Caco-2 (cell line): ENCODE measurements at regions of chr16 and their contacts with region 1.

Region 1: GRCh38 chr16:75622761-75623605 is at the start of gene ADAT1:
- DNase-seq: peak; percentile 98
- H3K4me3 ChIP-seq: peak within 1 kb of the TSS; percentile 68
- H3K4me3 Mint-ChIP-seq: peak within 1 kb of the TSS; percentile 94
- H3K27ac Mint-ChIP-seq: peak within 1 kb of the TSS; percentile 98
- H3K4me1 ChIP-seq: peaks cover 35% of the 10 kb centered on the region
- H3K4me1 Mint-ChIP-seq: peaks cover 33% of the 10 kb centered on the region
- H3K27me3 ChIP-seq: no peaks in the 10 kb centered on the region
- H3K27me3 Mint-ChIP-seq: no peaks in the 10 kb centered on the region
- CTCF ChIP-seq: no peak
- total RNA-seq, gene ADAT1: 70.1 and 71.3 TPM in 2 replicates

Region 2: DNA sequence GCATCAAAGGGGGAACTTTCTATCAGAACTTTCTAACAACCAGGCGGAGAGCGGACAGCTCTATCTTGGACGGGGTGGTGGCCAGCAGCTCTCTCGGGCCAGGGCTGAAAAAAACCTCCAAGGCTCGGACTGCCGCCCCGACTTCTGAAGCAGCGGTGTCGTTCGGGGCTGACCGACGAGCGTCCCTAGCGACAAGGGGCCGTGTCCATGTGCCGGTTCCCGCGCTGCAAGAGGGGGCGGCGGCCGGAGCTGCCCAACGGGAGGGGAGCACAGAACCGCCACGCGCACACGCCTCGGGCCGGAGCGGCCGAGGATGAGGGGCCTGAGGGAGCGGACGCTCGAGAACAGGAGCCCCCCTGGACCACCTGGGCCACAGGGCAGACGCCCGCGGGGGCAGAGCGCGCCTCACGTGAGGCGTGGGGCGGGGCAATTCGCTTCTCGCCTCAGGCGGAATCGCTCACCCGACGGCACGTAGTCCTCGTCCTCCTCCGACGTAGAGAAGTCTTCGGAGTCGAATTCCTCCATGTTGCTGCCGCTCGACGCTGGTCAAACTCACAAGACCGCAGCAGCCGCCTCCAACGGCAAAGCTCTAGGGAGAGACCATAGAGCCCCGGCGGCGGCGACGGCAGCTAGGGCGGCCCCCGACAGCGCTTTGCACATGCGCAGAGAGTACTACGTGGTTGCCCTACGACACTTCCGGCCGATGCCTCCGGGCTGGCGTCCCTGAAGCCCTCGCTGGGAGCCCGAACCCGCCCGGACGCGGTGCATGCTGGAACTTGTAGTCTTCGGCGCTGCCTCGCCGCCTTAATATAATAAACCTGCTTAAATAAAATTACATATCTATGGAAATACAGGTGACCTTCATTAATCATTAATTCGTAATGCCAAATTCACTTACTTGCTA is 189.9 kb before region 1 on chr16 and contains the start of gene CFDP1:
- CTCF ChIA-PET with region 1: no interaction called
- POLR2A ChIA-PET with region 1: no interaction called
- intact Hi-C with region 1: loop called (anchors 1 kb)
- DNase-seq: peak; percentile 96 to 97
- H3K4me3 ChIP-seq: peak within 1 kb of the TSS; percentile 81
- H3K4me3 Mint-ChIP-seq: peak within 1 kb of the TSS; percentile 81
- H3K27ac Mint-ChIP-seq: peak within 1 kb of the TSS; percentile 88
- H3K4me1 ChIP-seq: no peaks in the 10 kb centered on the region
- H3K4me1 Mint-ChIP-seq: peaks cover 14% of the 10 kb centered on the region
- H3K27me3 ChIP-seq: no peaks in the 10 kb centered on the region
- H3K27me3 Mint-ChIP-seq: no peaks in the 10 kb centered on the region
- CTCF ChIP-seq: peak in 1 of 2 experiments; percentile 13
- total RNA-seq, gene CFDP1: 71.6 and 77.6 TPM in 2 replicates

Region 3: GRCh38 chr16:75452464-75453190 is 170.4 kb before region 1 on chr16:
- CTCF ChIA-PET with region 1: no interaction called
- POLR2A ChIA-PET with region 1: no interaction called
- intact Hi-C with region 1: no loop called
- DNase-seq: no peak
- H3K4me3 ChIP-seq: no peak overlapping the region
- H3K4me3 Mint-ChIP-seq: no peak overlapping the region
- H3K27ac Mint-ChIP-seq: no peak overlapping the region
- H3K4me1 ChIP-seq: no peaks in the 10 kb centered on the region
- H3K4me1 Mint-ChIP-seq: peaks cover 6% of the 10 kb centered on the region
- H3K27me3 ChIP-seq: no peaks in the 10 kb centered on the region
- H3K27me3 Mint-ChIP-seq: no peaks in the 10 kb centered on the region
- CTCF ChIP-seq: no peak

Region 4: GRCh38 chr16:75464130-75464918 is 158.7 kb before region 1 on chr16 and contains the start of gene TMEM170A:
- CTCF ChIA-PET with region 1: no interaction called
- POLR2A ChIA-PET with region 1: no interaction called
- intact Hi-C with region 1: loop called (anchors 2 kb)
- DNase-seq: peak; percentile 99 to 100
- H3K4me3 ChIP-seq: peak within 1 kb of the TSS; percentile 100
- H3K4me3 Mint-ChIP-seq: peak within 1 kb of the TSS; percentile 84
- H3K27ac Mint-ChIP-seq: peak within 1 kb of the TSS; percentile 79
- H3K4me1 ChIP-seq: peaks cover 5% of the 10 kb centered on the region
- H3K4me1 Mint-ChIP-seq: peaks cover 12% of the 10 kb centered on the region
- H3K27me3 ChIP-seq: no peaks in the 10 kb centered on the region
- H3K27me3 Mint-ChIP-seq: no peaks in the 10 kb centered on the region
- CTCF ChIP-seq: peak; percentile 100
- total RNA-seq, gene TMEM170A: 57.4 and 63.6 TPM in 2 replicates

Region 5: DNA sequence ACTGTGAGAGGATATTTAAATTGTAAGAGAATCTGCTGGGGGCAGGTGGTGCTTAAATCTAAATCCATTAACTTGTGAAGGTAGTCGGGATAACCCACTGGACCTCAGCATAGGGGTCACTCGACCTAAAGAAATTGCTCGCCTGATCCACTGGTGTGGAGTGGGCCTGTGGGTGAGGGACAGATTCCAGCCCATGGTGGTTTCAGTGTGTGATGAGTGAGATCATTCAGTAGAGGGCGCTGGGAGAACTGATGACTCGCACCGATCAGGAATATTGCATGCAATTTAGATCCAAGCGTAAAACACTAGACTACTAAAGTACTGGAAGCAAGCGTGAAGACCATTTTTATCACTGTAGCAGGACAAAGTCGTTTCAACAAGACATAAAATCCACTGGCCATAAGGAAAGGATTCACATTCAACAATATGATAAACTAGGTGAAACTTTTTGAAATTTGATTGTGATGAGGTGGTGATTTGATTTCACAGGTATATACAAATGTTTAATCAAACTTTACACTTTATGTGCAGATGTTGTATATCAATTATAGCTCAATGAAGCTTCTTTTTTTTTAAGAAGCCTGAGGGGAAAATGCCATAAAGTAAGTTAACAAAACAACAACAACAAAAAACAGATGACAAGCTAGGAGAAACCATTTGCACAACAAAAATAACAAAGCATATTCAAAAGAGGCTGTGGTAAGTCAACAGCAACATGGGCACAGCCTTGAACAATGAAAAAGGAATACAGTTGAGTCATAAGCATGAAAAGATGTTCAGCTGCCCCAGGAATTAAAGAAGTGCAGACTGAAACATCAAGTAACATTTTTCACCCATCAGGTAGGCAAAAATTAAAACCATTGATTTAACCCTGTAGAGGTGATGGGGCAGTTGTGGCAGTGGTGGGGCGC is 151.0 kb before region 1 on chr16:
- CTCF ChIA-PET with region 1: interaction called, 3 read pairs
- POLR2A ChIA-PET with region 1: no interaction called
- intact Hi-C with region 1: loop called (anchors 1 kb)
- DNase-seq: peak in 1 of 2 experiments; percentile 68
- H3K4me3 ChIP-seq: no peak overlapping the region
- H3K4me3 Mint-ChIP-seq: no peak overlapping the region
- H3K27ac Mint-ChIP-seq: no peak overlapping the region
- H3K4me1 ChIP-seq: no peaks in the 10 kb centered on the region
- H3K4me1 Mint-ChIP-seq: no peaks in the 10 kb centered on the region
- H3K27me3 ChIP-seq: no peaks in the 10 kb centered on the region
- H3K27me3 Mint-ChIP-seq: peaks cover 3% of the 10 kb centered on the region
- CTCF ChIP-seq: peak; percentile 77 to 83

Region 6: GRCh38 chr16:75566040-75566810 is 56.8 kb before region 1 on chr16 and contains the start of gene GABARAPL2:
- CTCF ChIA-PET with region 1: no interaction called
- POLR2A ChIA-PET with region 1: interaction called, 6 read pairs
- intact Hi-C with region 1: loop called (anchors 1 kb)
- DNase-seq: peak; percentile 88 to 95
- H3K4me3 ChIP-seq: peak within 1 kb of the TSS; percentile 44
- H3K4me3 Mint-ChIP-seq: peak within 1 kb of the TSS; percentile 85
- H3K27ac Mint-ChIP-seq: peak within 1 kb of the TSS; percentile 58
- H3K4me1 ChIP-seq: 0 out of 2 replicates have a peak, but pooled peaks cover 10% of the 10 kb centered on the region
- H3K4me1 Mint-ChIP-seq: no peaks in the 10 kb centered on the region
- H3K27me3 ChIP-seq: no peaks in the 10 kb centered on the region
- H3K27me3 Mint-ChIP-seq: peaks cover 10% of the 10 kb centered on the region
- CTCF ChIP-seq: no peak
- total RNA-seq, gene GABARAPL2: 82.6 and 88.2 TPM in 2 replicates

Region 7: GRCh38 chr16:75647492-75648264 is 24.7 kb after region 1 on chr16 and contains the starts of genes KARS1 and TERF2IP:
- CTCF ChIA-PET with region 1: no interaction called
- POLR2A ChIA-PET with region 1: interaction called, 14 read pairs
- intact Hi-C with region 1: loop called (anchors 1 kb)
- DNase-seq: peak; percentile 93 to 95
- H3K4me3 ChIP-seq: peak within 1 kb of the TSS; percentile 97
- H3K4me3 Mint-ChIP-seq: peak within 1 kb of the TSS; percentile 91
- H3K27ac Mint-ChIP-seq: peak within 1 kb of the TSS; percentile 98
- H3K4me1 ChIP-seq: peaks cover 12% of the 10 kb centered on the region
- H3K4me1 Mint-ChIP-seq: peaks cover 18% of the 10 kb centered on the region
- H3K27me3 ChIP-seq: no peaks in the 10 kb centered on the region
- H3K27me3 Mint-ChIP-seq: no peaks in the 10 kb centered on the region
- CTCF ChIP-seq: no peak
- total RNA-seq, gene KARS1: 244 and 245 TPM in 2 replicates
- total RNA-seq, gene TERF2IP: 25.1 and 27.1 TPM in 2 replicates

Region 8: DNA sequence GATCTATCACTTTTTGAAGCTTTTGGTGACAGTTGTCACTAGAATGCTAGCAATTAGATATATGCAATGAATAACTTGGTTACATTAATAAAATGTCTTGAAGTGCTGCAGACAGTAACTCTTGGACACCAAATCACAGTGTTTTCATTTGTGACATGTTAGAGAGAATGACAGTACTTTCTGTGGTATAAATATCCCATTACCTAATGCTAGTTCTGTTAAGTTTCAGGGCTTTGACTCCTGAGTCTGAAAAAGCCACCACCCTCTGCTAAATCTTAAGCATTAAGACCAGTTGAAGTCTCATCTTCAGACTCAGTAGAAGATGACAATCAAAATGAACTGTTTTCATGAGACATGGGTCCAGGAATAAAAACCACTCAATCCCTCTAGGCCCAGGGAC is 64.4 kb after region 1 on chr16:
- CTCF ChIA-PET with region 1: no interaction called
- POLR2A ChIA-PET with region 1: no interaction called
- intact Hi-C with region 1: no loop called
- DNase-seq: no peak
- H3K4me3 ChIP-seq: no peak overlapping the region
- H3K4me3 Mint-ChIP-seq: no peak overlapping the region
- H3K27ac Mint-ChIP-seq: no peak overlapping the region
- H3K4me1 ChIP-seq: no peaks in the 10 kb centered on the region
- H3K4me1 Mint-ChIP-seq: no peaks in the 10 kb centered on the region
- H3K27me3 ChIP-seq: no peaks in the 10 kb centered on the region
- H3K27me3 Mint-ChIP-seq: no peaks in the 10 kb centered on the region
- CTCF ChIP-seq: no peak

Region 9: DNA sequence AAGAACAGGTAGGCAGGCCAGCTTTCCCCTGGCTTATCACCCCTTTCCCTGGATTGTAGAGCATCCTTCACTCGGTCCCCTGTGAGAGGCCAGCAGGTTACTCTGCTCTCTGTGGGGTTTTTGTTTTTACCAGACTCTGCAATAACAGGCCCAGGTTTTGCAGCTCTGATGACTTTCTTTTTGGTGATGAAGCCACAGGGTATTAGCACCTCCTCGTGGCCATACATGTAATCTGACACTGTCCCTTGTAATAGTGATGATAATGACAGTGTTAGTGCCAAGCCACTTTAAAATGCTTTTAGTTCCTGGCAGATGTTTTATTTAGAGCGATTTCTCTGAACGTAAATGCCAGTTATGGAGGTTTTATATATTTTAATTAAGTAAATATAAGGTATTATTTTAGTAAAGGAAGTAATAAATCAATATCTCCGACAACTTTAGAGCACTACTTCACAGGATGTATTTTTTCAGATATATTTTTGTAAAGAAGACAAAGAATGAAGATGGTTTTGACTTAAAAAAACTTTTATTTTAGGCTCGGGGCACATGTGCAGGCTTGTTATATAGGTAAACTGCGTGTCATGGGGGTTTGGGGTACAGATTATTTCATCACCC is 141.3 kb after region 1 on chr16:
- CTCF ChIA-PET with region 1: interaction called, 15 read pairs
- POLR2A ChIA-PET with region 1: no interaction called
- intact Hi-C with region 1: loop called (anchors 1 kb)
- DNase-seq: peak; percentile 67 to 73
- H3K4me3 ChIP-seq: no peak overlapping the region
- H3K4me3 Mint-ChIP-seq: no peak overlapping the region
- H3K27ac Mint-ChIP-seq: no peak overlapping the region
- H3K4me1 ChIP-seq: no peaks in the 10 kb centered on the region
- H3K4me1 Mint-ChIP-seq: no peaks in the 10 kb centered on the region
- H3K27me3 ChIP-seq: no peaks in the 10 kb centered on the region
- H3K27me3 Mint-ChIP-seq: peaks cover 10% of the 10 kb centered on the region
- CTCF ChIP-seq: peak; percentile 85 to 90